B cell (primary cell): ENCODE measurements at regions of chr22 and their contacts with region 1.

Region 1: GRCh38 chr22:38610234-38610633 is 40.3 kb upstream of the DMC1 start:
- DNase-seq: no peak
- ATAC-seq: no peak
- H3K4me3 ChIP-seq: no peak overlapping the region
- H3K4me3 Mint-ChIP-seq: no peak overlapping the region
- H3K27ac ChIP-seq: no peak overlapping the region
- H3K27ac Mint-ChIP-seq: no peak overlapping the region
- H3K4me1 ChIP-seq: no peaks in the 10 kb centered on the region
- H3K4me1 Mint-ChIP-seq: no peaks in the 10 kb centered on the region
- H3K27me3 ChIP-seq: no peaks in the 10 kb centered on the region
- H3K27me3 Mint-ChIP-seq: peaks cover 14% of the 10 kb centered on the region
- CTCF ChIP-seq: no peak

Region 2: GRCh38 chr22:38494498-38494897 is 115.7 kb before region 1 on chr22:
- CTCF ChIA-PET with region 1: no interaction called
- POLR2A ChIA-PET with region 1: no interaction called
- intact Hi-C with region 1: no loop called
- DNase-seq: no peak
- ATAC-seq: no peak
- H3K4me3 ChIP-seq: no peak overlapping the region
- H3K4me3 Mint-ChIP-seq: no peak overlapping the region
- H3K27ac ChIP-seq: no peak overlapping the region
- H3K27ac Mint-ChIP-seq: no peak overlapping the region
- H3K4me1 ChIP-seq: no peaks in the 10 kb centered on the region
- H3K4me1 Mint-ChIP-seq: peaks cover 12% of the 10 kb centered on the region
- H3K27me3 ChIP-seq: no peaks in the 10 kb centered on the region
- H3K27me3 Mint-ChIP-seq: no peaks in the 10 kb centered on the region
- CTCF ChIP-seq: no peak

Region 3: GRCh38 chr22:38564669-38565068 is 45.6 kb before region 1 on chr22:
- CTCF ChIA-PET with region 1: no interaction called
- POLR2A ChIA-PET with region 1: no interaction called
- intact Hi-C with region 1: no loop called
- DNase-seq: no peak
- ATAC-seq: no peak
- H3K4me3 ChIP-seq: no peak overlapping the region
- H3K4me3 Mint-ChIP-seq: no peak overlapping the region
- H3K27ac ChIP-seq: no peak overlapping the region
- H3K27ac Mint-ChIP-seq: no peak overlapping the region
- H3K4me1 ChIP-seq: peaks cover 3 to 5% of the 10 kb centered on the region in 2 donors
- H3K4me1 Mint-ChIP-seq: peaks cover 1% of the 10 kb centered on the region
- H3K27me3 ChIP-seq: no peaks in the 10 kb centered on the region
- H3K27me3 Mint-ChIP-seq: no peaks in the 10 kb centered on the region
- CTCF ChIP-seq: no peak

Region 4: GRCh38 chr22:38623351-38623750 is 13.1 kb after region 1 on chr22:
- CTCF ChIA-PET with region 1: no interaction called
- POLR2A ChIA-PET with region 1: interaction called, 12 read pairs
- intact Hi-C with region 1: no loop called
- DNase-seq: no peak
- ATAC-seq: no peak
- H3K4me3 ChIP-seq: no peak overlapping the region
- H3K4me3 Mint-ChIP-seq: no peak overlapping the region
- H3K27ac ChIP-seq: no peak overlapping the region
- H3K27ac Mint-ChIP-seq: no peak overlapping the region
- H3K4me1 ChIP-seq: no peaks in the 10 kb centered on the region
- H3K4me1 Mint-ChIP-seq: no peaks in the 10 kb centered on the region
- H3K27me3 ChIP-seq: no peaks in the 10 kb centered on the region
- H3K27me3 Mint-ChIP-seq: peaks cover 19% of the 10 kb centered on the region
- CTCF ChIP-seq: no peak

Region 5: GRCh38 chr22:38674888-38675287 is 64.7 kb after region 1 on chr22:
- CTCF ChIA-PET with region 1: no interaction called
- POLR2A ChIA-PET with region 1: no interaction called
- intact Hi-C with region 1: no loop called
- DNase-seq: no peak
- ATAC-seq: no peak
- H3K4me3 ChIP-seq: no peak overlapping the region
- H3K4me3 Mint-ChIP-seq: no peak overlapping the region
- H3K27ac ChIP-seq: no peak overlapping the region
- H3K27ac Mint-ChIP-seq: no peak overlapping the region
- H3K4me1 ChIP-seq: no peaks in the 10 kb centered on the region
- H3K4me1 Mint-ChIP-seq: no peaks in the 10 kb centered on the region
- H3K27me3 ChIP-seq: no peaks in the 10 kb centered on the region
- H3K27me3 Mint-ChIP-seq: no peaks in the 10 kb centered on the region
- CTCF ChIP-seq: no peak